ENCODE measurements at regions of chr5 and their contacts with region 1.

Region 1: GRCh38 chr5:126348855-126349635 is 74.2 kb upstream of the GRAMD2B start:
- DNase-seq: no peak
- ATAC-seq: no peak
- H3K4me3 ChIP-seq: no peak overlapping the region
- H3K27ac ChIP-seq: no peak overlapping the region
- H3K4me1 ChIP-seq: peaks cover 0 to 4% (median 0%) of the 10 kb centered on the region in 12 donors
- H3K27me3 ChIP-seq: no peaks in the 10 kb centered on the region
- CTCF ChIP-seq: no peak
- POLR2A ChIP-seq: no peak

Region 2: DNA sequence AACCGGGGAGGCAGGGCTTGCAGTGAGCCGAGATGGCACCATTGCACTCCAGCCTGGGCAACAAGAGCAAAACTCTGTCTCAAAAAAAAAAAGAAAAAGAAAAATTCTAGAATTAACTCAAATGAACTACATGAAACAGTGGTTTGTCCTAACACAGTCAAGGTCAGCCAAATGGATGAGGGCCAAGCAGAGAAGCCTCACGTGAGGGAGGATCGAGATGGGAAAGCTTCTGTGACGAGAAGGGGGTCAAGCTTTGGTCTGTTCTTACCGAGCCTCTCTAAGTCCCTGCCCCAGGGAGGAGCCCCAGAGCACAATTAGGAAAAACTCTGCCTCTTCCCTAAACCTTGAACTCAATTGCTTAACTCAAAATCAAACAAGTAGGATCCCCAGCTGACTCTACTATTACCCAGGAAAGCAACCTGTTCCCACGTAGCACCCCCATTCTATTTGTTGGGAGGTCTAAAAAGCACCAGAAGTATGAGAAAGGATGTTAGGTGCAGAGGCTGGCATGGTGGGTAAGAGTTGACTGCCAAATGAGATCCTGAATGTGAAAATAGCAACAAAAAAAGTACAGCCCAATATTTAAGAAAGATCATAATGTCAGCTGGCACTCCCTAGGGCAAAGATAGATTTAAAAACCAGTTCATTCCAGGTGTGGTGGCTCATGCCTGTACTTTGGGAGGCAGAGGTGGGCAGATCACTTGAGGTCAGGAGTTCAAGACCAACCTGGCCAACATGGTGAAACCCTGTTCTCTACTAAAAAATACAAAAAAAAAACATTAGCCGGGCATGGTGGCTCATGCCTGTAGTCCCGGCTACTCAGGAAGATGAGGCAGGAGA is 238.7 kb after region 1 on chr5:
- intact Hi-C with region 1: loop called in 1 of 10 experiments (anchors 5 kb)
- DNase-seq: no peak
- ATAC-seq: no peak
- H3K4me3 ChIP-seq: no peak overlapping the region
- H3K27ac ChIP-seq: no peak overlapping the region
- H3K4me1 ChIP-seq: peaks cover 0 to 8% (median 0%) of the 10 kb centered on the region in 12 donors
- H3K27me3 ChIP-seq: no peaks in the 10 kb centered on the region
- CTCF ChIP-seq: no peak
- POLR2A ChIP-seq: no peak

Region 3: DNA sequence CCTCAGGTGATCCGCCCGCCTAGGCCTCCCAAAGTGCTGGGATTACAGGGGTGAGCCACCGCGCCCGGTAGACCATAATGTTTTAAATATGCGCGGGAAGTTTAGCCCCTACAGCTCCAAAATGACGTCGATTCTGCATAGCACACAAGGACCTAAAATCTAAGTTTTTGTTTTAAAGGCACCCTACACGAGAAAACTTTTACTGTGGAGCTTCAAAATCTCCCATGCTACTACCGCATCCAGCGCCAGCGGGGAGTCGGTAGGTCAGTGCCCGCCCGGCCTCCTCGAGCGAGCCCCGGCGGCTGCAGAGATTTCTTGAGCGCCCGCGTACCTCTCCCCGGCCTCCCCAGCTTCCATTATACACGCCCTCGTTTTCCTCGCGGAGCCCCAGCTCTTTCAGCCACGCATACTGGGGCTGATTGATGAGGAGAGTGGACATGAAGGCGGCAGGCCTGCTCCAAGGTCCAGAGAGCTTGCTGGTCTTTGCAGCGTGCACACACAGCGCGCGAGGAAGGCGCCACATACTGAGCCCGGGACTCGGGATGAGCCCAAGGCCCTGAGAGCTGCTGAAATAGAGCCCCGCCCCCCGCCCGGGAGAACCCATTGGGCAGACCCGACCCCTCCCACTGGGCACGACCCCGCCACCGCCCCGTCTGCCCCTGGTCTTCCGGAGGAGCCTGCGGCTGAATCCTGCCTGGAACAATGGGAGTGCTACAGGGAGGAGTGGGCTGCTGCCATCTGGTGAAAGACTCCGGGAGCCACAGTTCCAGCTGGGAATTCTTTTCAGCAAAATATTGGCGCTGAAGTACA is 245.8 kb after region 1 on chr5 and contains the start of gene ALDH7A1:
- intact Hi-C with region 1: loop called in 5 of 10 experiments (anchors 2 to 5 kb)
- DNase-seq: peak; percentile 93 to 96 (median 95)
- ATAC-seq: peak; percentile 96 to 97 (median 96)
- H3K4me3 ChIP-seq: peak within 1 kb of the TSS; percentile 33 to 83 (median 72)
- H3K27ac ChIP-seq: peak within 1 kb of the TSS in 11 of 12 donors; percentile 62 to 93 (median 77)
- H3K4me1 ChIP-seq: peaks cover 0 to 23% (median 12%) of the 10 kb centered on the region in 12 donors
- H3K27me3 ChIP-seq: no peaks in the 10 kb centered on the region
- CTCF ChIP-seq: peak; percentile 20 to 70 (median 38)
- POLR2A ChIP-seq: peak in 1 of 2 donors; percentile 68
- total RNA-seq, gene ALDH7A1: 12.3 to 67.6 (median 45.0) TPM